GM12878 (cell line): ENCODE measurements at regions of chr1 and their contacts with region 1.

Region 1: GRCh38 chr1:204398217-204399081 is 13.2 kb downstream of the PPP1R15B start:
- DNase-seq: no peak
- ATAC-seq: peak; percentile 94
- H3K4me3 ChIP-seq: no peak overlapping the region
- H3K27ac ChIP-seq: no peak overlapping the region
- H3K4me1 ChIP-seq: no peaks in the 10 kb centered on the region
- H3K27me3 ChIP-seq: no peaks in the 10 kb centered on the region
- CTCF ChIP-seq: peak; percentile 83 to 91 (median 86)
- EP300 ChIP-seq: no peak
- POLR2A ChIP-seq: no peak
- RAD21 ChIP-seq: peak; percentile 62

Region 2: GRCh38 chr1:204162231-204163074 is 236.0 kb before region 1 on chr1:
- CTCF ChIA-PET with region 1: interaction called, 92 read pairs
- POLR2A ChIA-PET with region 1: no interaction called
- RAD21 ChIA-PET with region 1: interaction called, 39 read pairs
- SMC1A ChIA-PET with region 1: interaction called, 23 read pairs
- in situ Hi-C with region 1: no loop called
- intact Hi-C with region 1: loop called (anchors 10 kb)
- DNase-seq: no peak
- ATAC-seq: peak; percentile 99
- H3K4me3 ChIP-seq: no peak overlapping the region
- H3K27ac ChIP-seq: no peak overlapping the region
- H3K4me1 ChIP-seq: no peaks in the 10 kb centered on the region
- H3K27me3 ChIP-seq: no peaks in the 10 kb centered on the region; a peak in 1 of 4 replicates
- CTCF ChIP-seq: peak; percentile 94 to 99 (median 99)
- EP300 ChIP-seq: no peak
- POLR2A ChIP-seq: no peak
- RAD21 ChIP-seq: peak; percentile 84

Region 3: DNA sequence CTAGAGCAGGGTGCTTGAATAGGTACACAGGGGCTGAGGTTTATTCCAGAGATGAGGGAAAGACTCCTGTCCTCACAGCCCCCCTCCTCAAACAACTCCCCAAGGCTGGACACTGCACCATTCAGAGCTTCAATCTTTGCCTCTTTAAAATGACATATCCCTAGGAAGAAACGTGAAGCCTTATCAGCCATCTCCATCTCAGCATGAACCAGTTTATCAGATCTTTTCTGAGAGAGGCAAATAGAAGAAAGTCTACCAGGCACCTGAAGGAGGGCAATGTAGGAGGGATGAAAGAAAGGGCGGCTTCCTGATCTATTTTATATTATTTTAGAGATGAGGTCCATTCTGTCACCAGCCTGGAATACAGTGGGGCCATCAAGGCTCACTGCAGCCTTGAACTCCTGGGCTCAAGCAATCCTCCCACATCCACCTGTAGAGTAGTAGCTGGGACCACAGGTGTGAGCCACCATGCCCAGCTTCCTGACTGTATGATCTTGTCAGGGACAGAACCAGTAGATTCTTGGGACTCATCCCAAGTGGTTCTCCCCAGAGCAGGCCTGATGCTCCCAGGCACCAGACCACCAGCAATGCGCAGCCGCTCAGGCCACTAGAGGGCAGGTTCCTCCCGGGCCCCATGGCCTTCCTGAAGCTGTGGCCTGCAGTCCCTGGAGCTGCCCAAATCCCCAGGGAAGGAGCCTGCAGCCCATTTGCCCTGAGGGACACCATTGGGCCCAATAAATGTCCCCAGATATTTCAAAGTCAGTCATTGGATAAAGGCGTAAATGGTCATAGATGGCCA is 140.3 kb before region 1 on chr1:
- CTCF ChIA-PET with region 1: interaction called, 55 read pairs
- POLR2A ChIA-PET with region 1: no interaction called
- RAD21 ChIA-PET with region 1: interaction called, 23 read pairs
- SMC1A ChIA-PET with region 1: interaction called, 23 read pairs
- in situ Hi-C with region 1: no loop called
- intact Hi-C with region 1: no loop called
- DNase-seq: no peak
- ATAC-seq: peak; percentile 84
- H3K4me3 ChIP-seq: no peak overlapping the region
- H3K27ac ChIP-seq: no peak overlapping the region
- H3K4me1 ChIP-seq: no peaks in the 10 kb centered on the region
- H3K27me3 ChIP-seq: peaks cover 2 to 6% of the 10 kb centered on the region in 2 experiments; a peak in 3 of 4 replicates
- CTCF ChIP-seq: peak; percentile 55 to 69 (median 63)
- EP300 ChIP-seq: no peak
- POLR2A ChIP-seq: no peak
- RAD21 ChIP-seq: peak; percentile 45

Region 4: GRCh38 chr1:204368996-204369726 is 29.3 kb before region 1 on chr1:
- CTCF ChIA-PET with region 1: interaction called, 297 read pairs
- POLR2A ChIA-PET with region 1: interaction called, 3 read pairs
- RAD21 ChIA-PET with region 1: interaction called, 133 read pairs
- SMC1A ChIA-PET with region 1: interaction called, 141 read pairs
- in situ Hi-C with region 1: no loop called
- intact Hi-C with region 1: no loop called
- DNase-seq: no peak
- ATAC-seq: no peak
- H3K4me3 ChIP-seq: no peak overlapping the region
- H3K27ac ChIP-seq: no peak overlapping the region
- H3K4me1 ChIP-seq: no peaks in the 10 kb centered on the region
- H3K27me3 ChIP-seq: 0 out of 4 replicates have a peak, but pooled peaks cover 0 to 2% of the 10 kb centered on the region in 2 experiments
- CTCF ChIP-seq: no peak
- EP300 ChIP-seq: no peak
- POLR2A ChIP-seq: no peak
- RAD21 ChIP-seq: no peak

Region 5: DNA sequence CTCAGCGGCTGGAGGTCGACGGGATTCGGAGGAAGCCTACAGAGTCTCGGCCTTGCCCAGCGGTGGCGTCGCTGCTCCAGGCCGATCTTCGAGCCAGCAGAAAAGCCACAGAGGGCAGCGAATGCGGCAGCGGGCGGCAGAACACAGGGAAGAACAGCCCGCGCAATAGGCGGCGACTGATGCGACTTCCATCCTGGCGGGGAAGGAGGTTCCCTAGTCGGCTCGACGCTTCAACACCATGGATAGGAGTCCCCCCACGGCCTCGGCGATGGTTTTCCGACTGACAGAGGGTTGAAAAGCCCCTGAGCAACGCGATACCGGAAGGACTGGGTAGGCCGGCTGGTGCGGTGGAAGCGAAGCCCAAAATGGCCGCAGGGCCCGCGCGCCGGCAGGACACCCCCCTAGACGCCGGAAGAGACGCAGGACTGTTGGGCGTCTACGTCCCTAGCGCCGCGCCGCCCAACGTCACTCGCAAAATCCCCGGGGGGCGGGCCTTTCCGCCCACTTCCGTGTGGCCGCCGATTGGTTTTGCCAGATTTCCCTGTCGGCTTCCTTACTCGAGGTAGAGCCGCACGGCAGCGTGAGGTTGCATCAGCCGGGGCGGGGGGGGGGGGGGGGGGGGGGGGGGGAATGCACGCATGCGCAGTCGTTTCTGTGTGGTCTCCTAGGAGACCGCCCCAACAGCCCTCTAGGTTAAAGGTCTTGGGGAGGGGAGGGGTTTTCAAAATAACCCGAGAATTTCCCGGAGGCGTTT is 13.2 kb after region 1 on chr1 and contains the start of gene PPP1R15B:
- CTCF ChIA-PET with region 1: interaction called, 73 read pairs
- POLR2A ChIA-PET with region 1: interaction called, 9 read pairs
- RAD21 ChIA-PET with region 1: interaction called, 13 read pairs
- SMC1A ChIA-PET with region 1: interaction called, 16 read pairs
- in situ Hi-C with region 1: no loop called
- intact Hi-C with region 1: no loop called
- DNase-seq: peak; percentile 98
- ATAC-seq: peak; percentile 94
- H3K4me3 ChIP-seq: peak within 1 kb of the TSS; percentile 87
- H3K27ac ChIP-seq: peak within 1 kb of the TSS; percentile 99
- H3K4me1 ChIP-seq: no peaks in the 10 kb centered on the region
- H3K27me3 ChIP-seq: no peaks in the 10 kb centered on the region
- CTCF ChIP-seq: no peak
- EP300 ChIP-seq: 0 out of 4 replicates have a peak, but pooled peaks of 1 of the 2 experiments have one; percentile 29
- POLR2A ChIP-seq: peak; percentile 96
- RAD21 ChIP-seq: no peak
- polyA plus RNA-seq, gene PPP1R15B: 13.9 to 17.1 TPM

Region 6: GRCh38 chr1:204494281-204495077 is 96.0 kb after region 1 on chr1 and contains the start of gene PIK3C2B:
- CTCF ChIA-PET with region 1: interaction called, 17 read pairs
- POLR2A ChIA-PET with region 1: interaction called, 4 read pairs
- RAD21 ChIA-PET with region 1: interaction called, 4 read pairs
- SMC1A ChIA-PET with region 1: interaction called, 6 read pairs
- in situ Hi-C with region 1: no loop called
- intact Hi-C with region 1: no loop called
- DNase-seq: peak; percentile 55
- ATAC-seq: peak; percentile 92
- H3K4me3 ChIP-seq: peak within 1 kb of the TSS; percentile 92
- H3K27ac ChIP-seq: peak within 1 kb of the TSS; percentile 86
- H3K4me1 ChIP-seq: peaks cover 22% of the 10 kb centered on the region
- H3K27me3 ChIP-seq: no peaks in the 10 kb centered on the region
- CTCF ChIP-seq: peak; percentile 37 to 59 (median 43)
- EP300 ChIP-seq: no peak
- POLR2A ChIP-seq: peak; percentile 86
- RAD21 ChIP-seq: peak; percentile 47
- polyA plus RNA-seq, gene PIK3C2B: 2.2 to 5.0 TPM